Activated T-helper 2 cell treated with anti-CD3 and anti-CD28 coated beads, Interferon-gamma antibody, Interleukin-2, Interleukin-4, amounts not matched to agents 10 μg/mL and 5 μg/mL and 100 μg/mL, durations not matched to agents 14 hours and 24 hours and 36 hours (primary cell): ENCODE measurements at regions of chr14 and their contacts with region 1.

Region 1: DNA sequence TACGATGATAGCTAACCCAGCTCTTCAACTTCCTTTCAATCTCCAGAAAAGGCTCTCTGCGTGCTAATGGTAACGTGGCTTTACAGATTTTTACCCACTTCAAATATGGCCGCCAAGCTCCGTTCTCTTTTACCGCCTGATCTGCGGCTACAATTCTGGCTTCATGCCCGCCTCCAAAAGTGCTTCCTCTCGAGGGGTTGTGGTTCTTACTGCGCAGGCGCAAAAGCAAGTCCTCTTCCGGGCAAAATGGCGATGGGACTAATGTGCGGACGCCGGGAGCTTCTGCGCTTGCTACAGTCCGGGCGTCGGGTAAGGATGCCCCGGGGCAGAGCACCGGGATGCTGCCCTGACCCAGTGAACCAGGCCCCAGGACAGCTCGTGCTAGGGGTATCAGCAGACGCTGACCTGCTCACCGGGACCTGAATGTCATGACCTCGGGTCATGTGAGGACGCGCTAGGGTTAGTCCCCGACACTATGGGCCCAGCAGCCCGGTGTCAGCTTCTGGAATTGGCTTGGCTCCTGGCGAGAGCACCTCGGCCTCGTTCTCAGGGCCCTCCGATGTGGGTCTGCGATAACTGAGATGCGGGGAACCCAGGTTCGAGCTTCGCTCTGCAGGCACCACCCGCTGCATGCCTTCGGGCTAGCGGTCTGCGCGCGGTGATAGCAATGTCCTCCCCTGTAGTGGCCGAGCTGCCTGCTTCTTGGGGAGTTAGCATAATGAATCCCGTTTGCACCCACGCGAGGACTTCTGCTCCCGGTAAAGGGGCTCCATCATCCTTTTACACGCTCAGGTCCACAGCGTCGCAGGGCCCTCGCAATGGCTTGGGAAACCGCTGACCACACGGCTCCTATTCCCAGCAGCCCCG is at the start of gene OXA1L:
- DNase-seq: peak; percentile 96
- H3K4me3 Mint-ChIP-seq: peak within 1 kb of the TSS; percentile 85
- H3K27ac Mint-ChIP-seq: peak within 1 kb of the TSS; percentile 91
- H3K4me1 Mint-ChIP-seq: peaks cover 27% of the 10 kb centered on the region
- H3K27me3 Mint-ChIP-seq: no peaks in the 10 kb centered on the region
- total RNA-seq, gene OXA1L: 114 and 123 TPM in 2 replicates

Region 2: GRCh38 chr14:22589096-22589839 is 177.4 kb before region 1 on chr14 and contains the start of gene DAD1:
- intact Hi-C with region 1: loop called (anchors 1 kb)
- DNase-seq: peak; percentile 100
- H3K4me3 Mint-ChIP-seq: peak within 1 kb of the TSS; percentile 88
- H3K27ac Mint-ChIP-seq: peak within 1 kb of the TSS; percentile 95
- H3K4me1 Mint-ChIP-seq: peaks cover 51% of the 10 kb centered on the region
- H3K27me3 Mint-ChIP-seq: peaks cover 10% of the 10 kb centered on the region
- total RNA-seq, gene DAD1: 246 and 256 TPM in 2 replicates

Region 3: GRCh38 chr14:22715186-22715812 is 51.4 kb before region 1 on chr14:
- intact Hi-C with region 1: loop called (anchors 10 kb)
- DNase-seq: no peak
- H3K4me3 Mint-ChIP-seq: no peak overlapping the region
- H3K27ac Mint-ChIP-seq: no peak overlapping the region
- H3K4me1 Mint-ChIP-seq: peaks cover 22% of the 10 kb centered on the region
- H3K27me3 Mint-ChIP-seq: peaks cover 14% of the 10 kb centered on the region

Region 4: GRCh38 chr14:22781586-22781991 is 14.9 kb after region 1 on chr14:
- intact Hi-C with region 1: no loop called
- DNase-seq: no peak
- H3K4me3 Mint-ChIP-seq: no peak overlapping the region
- H3K27ac Mint-ChIP-seq: no peak overlapping the region
- H3K4me1 Mint-ChIP-seq: no peaks in the 10 kb centered on the region
- H3K27me3 Mint-ChIP-seq: no peaks in the 10 kb centered on the region

Region 5: DNA sequence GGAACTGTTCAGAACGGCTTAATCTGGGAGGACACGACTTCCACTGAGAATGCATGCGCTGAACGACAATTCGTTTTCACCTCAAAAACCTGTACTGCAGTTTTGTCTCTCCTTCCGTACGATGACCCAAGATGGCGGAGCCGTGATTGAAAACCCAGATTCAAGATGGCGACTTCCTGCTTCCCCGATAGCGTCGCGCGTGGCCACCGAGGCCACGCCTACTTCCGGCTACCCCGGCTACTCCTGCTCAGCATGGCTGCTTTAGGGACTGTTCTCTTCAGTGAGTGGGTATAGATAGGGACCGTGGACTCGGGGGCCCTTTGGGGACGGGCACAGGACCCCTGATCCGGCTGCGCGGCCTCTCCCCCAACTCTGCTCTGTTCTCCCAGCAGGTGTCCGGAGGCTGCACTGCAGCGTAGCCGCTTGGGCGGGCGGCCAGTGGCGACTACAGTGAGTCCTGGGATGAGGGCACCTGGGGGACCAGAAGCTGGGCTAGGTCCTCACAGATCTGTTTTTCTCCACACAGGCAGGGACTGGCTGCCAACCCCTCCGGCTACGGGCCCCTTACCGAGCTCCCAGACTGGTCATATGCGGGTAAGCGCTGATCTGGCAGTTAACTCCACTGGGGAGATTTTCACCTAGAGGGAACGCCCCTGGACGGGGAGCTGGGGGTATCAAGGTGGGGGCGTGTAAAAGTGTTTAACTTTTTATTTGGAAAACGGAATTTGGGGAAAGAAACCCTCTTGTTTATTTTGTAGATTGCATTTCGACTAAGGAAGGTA is 63.2 kb after region 1 on chr14 and contains the start of gene MRPL52:
- intact Hi-C with region 1: loop called (anchors 2 kb)
- DNase-seq: peak; percentile 81
- H3K4me3 Mint-ChIP-seq: peak within 1 kb of the TSS; percentile 94
- H3K27ac Mint-ChIP-seq: peak within 1 kb of the TSS; percentile 91
- H3K4me1 Mint-ChIP-seq: peaks cover 23% of the 10 kb centered on the region
- H3K27me3 Mint-ChIP-seq: no peaks in the 10 kb centered on the region
- total RNA-seq, gene MRPL52: 173 and 175 TPM in 2 replicates

Region 6: GRCh38 chr14:22929848-22930364 is 163.2 kb after region 1 on chr14:
- intact Hi-C with region 1: no loop called
- DNase-seq: no peak
- H3K4me3 Mint-ChIP-seq: no peak overlapping the region
- H3K27ac Mint-ChIP-seq: no peak overlapping the region
- H3K4me1 Mint-ChIP-seq: peaks cover 27% of the 10 kb centered on the region
- H3K27me3 Mint-ChIP-seq: no peaks in the 10 kb centered on the region